Activated CD4-positive, alpha-beta memory T cell treated with anti-CD3 and anti-CD28 coated beads, Interleukin-2, amount 10 ng/mL, durations not matched to agents 7 days and 5 days (primary cell): ENCODE measurements at regions of chr5 and their contacts with region 1.

Region 1: GRCh38 chr5:73902327-73903051 is 276.5 kb downstream of the ARHGEF28 start:
- DNase-seq: no peak
- H3K4me3 Mint-ChIP-seq: no peak overlapping the region
- H3K27ac Mint-ChIP-seq: no peak overlapping the region
- H3K4me1 Mint-ChIP-seq: peaks cover 17% of the 10 kb centered on the region
- H3K27me3 Mint-ChIP-seq: peaks cover 42% of the 10 kb centered on the region

Region 2: GRCh38 chr5:73844165-73844564 is 58.3 kb before region 1 on chr5:
- CTCF ChIA-PET with region 1: no interaction called
- POLR2A ChIA-PET with region 1: no interaction called
- DNase-seq: no peak
- H3K4me3 Mint-ChIP-seq: no peak overlapping the region
- H3K27ac Mint-ChIP-seq: no peak overlapping the region
- H3K4me1 Mint-ChIP-seq: no peaks in the 10 kb centered on the region
- H3K27me3 Mint-ChIP-seq: peaks cover 9% of the 10 kb centered on the region

Region 3: DNA sequence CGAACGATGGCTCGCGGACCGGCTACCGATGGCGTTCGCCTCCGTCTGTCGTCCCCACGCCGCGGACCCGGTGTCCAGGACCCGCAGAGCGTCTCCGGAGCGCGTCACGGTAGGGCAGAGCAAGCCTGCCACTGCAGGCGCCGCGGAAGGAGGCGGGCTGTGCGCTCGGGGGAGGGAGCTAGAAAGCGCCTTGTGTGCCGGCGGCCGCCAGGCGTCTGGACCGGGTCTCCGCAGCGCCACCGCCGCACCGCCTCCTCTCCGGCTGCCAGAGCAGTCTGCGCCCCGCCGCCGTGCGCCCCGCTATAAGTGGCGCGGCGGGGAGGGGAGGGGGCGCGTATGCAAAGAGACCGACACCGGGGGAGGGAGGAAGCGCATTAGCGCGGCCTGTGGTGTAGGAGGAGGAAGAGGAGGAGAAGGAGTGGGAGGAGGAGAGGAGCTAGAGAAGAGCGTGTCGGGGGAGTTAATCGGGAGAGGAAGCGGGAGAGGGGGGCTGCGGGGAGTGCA is 738.0 kb after region 1 on chr5 and contains the start of gene ENC1:
- CTCF ChIA-PET with region 1: interaction called, 21 read pairs
- POLR2A ChIA-PET with region 1: interaction called, 3 read pairs
- DNase-seq: peak; percentile 80
- H3K4me3 Mint-ChIP-seq: peak within 1 kb of the TSS; percentile 73
- H3K27ac Mint-ChIP-seq: no peak within 1 kb of the TSS
- H3K4me1 Mint-ChIP-seq: peaks cover 31% of the 10 kb centered on the region
- H3K27me3 Mint-ChIP-seq: peaks cover 52% of the 10 kb centered on the region
- total RNA-seq, gene ENC1: 0.43 to 0.73 TPM

Region 4: DNA sequence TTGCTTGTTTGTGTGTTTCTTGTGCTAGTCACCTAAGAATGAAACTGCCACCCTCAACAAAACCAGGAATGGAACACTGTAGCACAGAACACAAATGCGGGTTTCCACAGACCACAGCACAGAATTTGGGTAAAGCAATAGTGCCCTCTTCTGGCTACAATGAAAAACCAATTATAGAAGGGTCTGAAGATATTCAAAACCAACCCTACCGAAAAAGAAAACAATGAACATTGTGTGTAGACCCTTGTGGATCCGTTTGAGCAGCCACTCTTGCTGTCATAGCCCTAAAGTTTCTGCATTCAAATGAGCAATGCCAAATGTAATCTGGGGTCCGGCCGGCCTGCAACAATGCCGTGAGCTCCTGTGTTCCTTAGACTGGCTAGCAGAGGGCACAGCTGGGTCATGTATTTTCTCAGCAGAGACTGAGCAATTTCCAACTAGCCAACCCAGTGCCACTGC is 746.4 kb after region 1 on chr5:
- CTCF ChIA-PET with region 1: interaction called, 21 read pairs
- POLR2A ChIA-PET with region 1: no interaction called
- DNase-seq: peak; percentile 42
- H3K4me3 Mint-ChIP-seq: no peak overlapping the region
- H3K27ac Mint-ChIP-seq: no peak overlapping the region
- H3K4me1 Mint-ChIP-seq: peaks cover 1% of the 10 kb centered on the region
- H3K27me3 Mint-ChIP-seq: peaks cover 20% of the 10 kb centered on the region